ENCODE measurements at regions of chr5 and their contacts with region 1.

Region 1: GRCh38 chr5:172932313-172933017 is 26.8 kb upstream of the RPL26L1 start:
- DNase-seq: peak; percentile 64 to 97 (median 80)

Region 2: GRCh38 chr5:172463031-172463430 is 469.4 kb before region 1 on chr5:
- intact Hi-C with region 1: loop called (anchors 10 kb)
- DNase-seq: peak in 4 of 10 donors; percentile 42 to 85 (median 64)

Region 3: GRCh38 chr5:172716796-172717323 is 215.6 kb before region 1 on chr5:
- intact Hi-C with region 1: loop called (anchors 1 kb)
- DNase-seq: peak; percentile 74 to 97 (median 88)